ENCODE measurements at regions of chr11 and their contacts with region 1.

Region 1: GRCh38 chr11:118928108-118928870 is 2.6 kb upstream of the BCL9L start:
- DNase-seq: peak; percentile 87 to 100 (median 94)
- ATAC-seq: peak; percentile 58
- H3K4me3 ChIP-seq: peak overlapping the region; percentile 74 to 85
- H3K4me3 Mint-ChIP-seq: peak overlapping the region; percentile 96
- H3K27ac ChIP-seq: peak overlapping the region; percentile 88 to 97
- H3K27ac Mint-ChIP-seq: peak overlapping the region; percentile 98
- H3K4me1 ChIP-seq: peaks cover 29% of the 10 kb centered on the region
- H3K4me1 Mint-ChIP-seq: peaks cover 44% of the 10 kb centered on the region
- H3K27me3 ChIP-seq: no peaks in the 10 kb centered on the region
- H3K27me3 Mint-ChIP-seq: no peaks in the 10 kb centered on the region
- CTCF ChIP-seq: peak; percentile 79

Region 2: DNA sequence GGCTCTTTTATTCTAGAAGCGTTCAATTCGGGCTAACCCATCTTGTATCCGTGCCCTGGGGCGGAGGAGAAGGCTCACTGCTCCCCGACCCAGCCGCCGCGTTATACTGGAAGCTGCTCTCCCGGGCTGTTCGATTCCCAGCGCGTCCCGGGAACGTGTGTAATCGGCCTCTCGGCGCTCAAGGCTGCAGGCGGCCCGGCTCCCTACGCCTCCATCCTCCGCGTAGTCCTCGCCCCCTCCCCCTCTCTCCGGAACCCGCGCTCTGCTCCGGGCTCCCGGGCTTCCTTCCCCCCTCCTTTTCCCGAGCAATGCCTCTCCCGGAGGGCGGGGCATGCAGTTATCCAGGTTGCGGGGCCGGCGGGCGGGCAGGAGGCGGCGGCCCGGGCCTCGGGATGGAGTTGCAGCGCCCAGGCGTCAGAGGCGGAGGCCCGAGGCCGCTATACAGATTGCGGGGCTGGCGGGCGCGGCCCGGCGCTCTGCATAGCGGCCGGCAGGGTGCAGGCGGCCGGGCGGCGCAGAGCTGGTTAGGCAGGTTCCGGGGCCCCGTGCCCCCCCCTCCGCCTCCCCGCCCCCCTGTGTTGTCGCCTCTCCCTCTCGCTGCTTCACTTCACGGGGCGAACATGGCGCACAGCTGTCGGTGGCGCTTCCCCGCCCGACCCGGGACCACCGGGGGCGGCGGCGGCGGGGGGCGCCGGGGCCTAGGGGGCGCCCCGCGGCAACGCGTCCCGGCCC is 492.2 kb before region 1 on chr11 and contains the start of gene KMT2A:
- CTCF ChIA-PET with region 1: no interaction called
- POLR2A ChIA-PET with region 1: no interaction called
- intact Hi-C with region 1: loop called in 1 of 2 experiments (anchors 5 kb)
- DNase-seq: peak; percentile 91 to 99 (median 94)
- ATAC-seq: peak; percentile 62
- H3K4me3 ChIP-seq: peak within 1 kb of the TSS; percentile 89 to 94
- H3K4me3 Mint-ChIP-seq: peak within 1 kb of the TSS; percentile 96
- H3K27ac ChIP-seq: peak within 1 kb of the TSS; percentile 79 to 94
- H3K27ac Mint-ChIP-seq: peak within 1 kb of the TSS; percentile 98
- H3K4me1 ChIP-seq: peaks cover 30% of the 10 kb centered on the region
- H3K4me1 Mint-ChIP-seq: peaks cover 35% of the 10 kb centered on the region
- H3K27me3 ChIP-seq: no peaks in the 10 kb centered on the region
- H3K27me3 Mint-ChIP-seq: no peaks in the 10 kb centered on the region
- CTCF ChIP-seq: no peak
- total RNA-seq, gene KMT2A: 127 to 136 TPM

Region 3: GRCh38 chr11:118652681-118653181 is 275.6 kb before region 1 on chr11:
- CTCF ChIA-PET with region 1: no interaction called
- POLR2A ChIA-PET with region 1: no interaction called
- intact Hi-C with region 1: no loop called
- DNase-seq: no peak
- ATAC-seq: no peak
- H3K4me3 ChIP-seq: no peak overlapping the region
- H3K4me3 Mint-ChIP-seq: no peak overlapping the region
- H3K27ac ChIP-seq: no peak overlapping the region
- H3K27ac Mint-ChIP-seq: peak overlapping the region; percentile 66
- H3K4me1 ChIP-seq: no peaks in the 10 kb centered on the region
- H3K4me1 Mint-ChIP-seq: peaks cover 7% of the 10 kb centered on the region
- H3K27me3 ChIP-seq: no peaks in the 10 kb centered on the region
- H3K27me3 Mint-ChIP-seq: no peaks in the 10 kb centered on the region
- CTCF ChIP-seq: no peak

Region 4: DNA sequence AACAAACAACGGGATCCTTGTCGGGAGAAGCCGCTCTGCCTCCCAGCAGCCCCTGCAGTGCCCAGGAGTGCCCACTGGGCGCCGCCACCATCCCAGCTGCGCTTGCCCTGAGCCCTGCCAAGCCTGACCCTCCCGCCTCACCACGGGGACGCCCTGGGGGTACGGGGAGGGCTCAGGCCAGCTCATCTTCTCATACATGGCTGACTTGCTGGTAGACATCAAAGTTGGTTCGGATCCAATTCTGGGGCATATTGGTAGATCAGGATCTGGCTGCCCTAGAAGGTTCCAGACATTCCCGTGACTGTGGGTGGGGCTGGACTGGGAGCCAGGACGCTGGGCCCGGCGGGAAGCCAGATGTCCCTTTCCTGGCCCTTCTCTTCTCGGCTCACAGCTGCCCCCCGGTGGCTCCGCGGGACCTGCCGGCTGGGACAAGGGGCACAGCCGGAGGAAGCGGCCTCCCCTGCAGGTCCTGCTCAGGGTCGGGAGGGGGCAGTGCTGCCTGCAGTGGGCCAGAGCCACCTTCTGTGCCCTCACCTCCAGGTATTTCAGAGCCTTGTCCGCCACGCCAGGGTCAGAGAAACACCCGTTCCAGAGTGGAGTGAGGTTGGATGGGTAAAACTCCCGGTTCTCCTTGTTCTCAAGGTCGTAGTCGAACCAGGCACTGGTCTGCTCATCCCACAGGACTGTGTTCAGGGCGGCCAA is 238.3 kb before region 1 on chr11:
- CTCF ChIA-PET with region 1: interaction called, 15 read pairs
- POLR2A ChIA-PET with region 1: interaction called, 4 read pairs
- intact Hi-C with region 1: loop called in 1 of 2 experiments (anchors 1 kb)
- DNase-seq: peak; percentile 67 to 92 (median 89)
- ATAC-seq: peak; percentile 85
- H3K4me3 ChIP-seq: peak overlapping the region; percentile 45 to 83
- H3K4me3 Mint-ChIP-seq: peak overlapping the region; percentile 74
- H3K27ac ChIP-seq: peak overlapping the region; percentile 40 to 51
- H3K27ac Mint-ChIP-seq: peak overlapping the region; percentile 87
- H3K4me1 ChIP-seq: peaks cover 54% of the 10 kb centered on the region
- H3K4me1 Mint-ChIP-seq: peaks cover 58% of the 10 kb centered on the region
- H3K27me3 ChIP-seq: no peaks in the 10 kb centered on the region
- H3K27me3 Mint-ChIP-seq: no peaks in the 10 kb centered on the region
- CTCF ChIP-seq: peak; percentile 98

Region 5: DNA sequence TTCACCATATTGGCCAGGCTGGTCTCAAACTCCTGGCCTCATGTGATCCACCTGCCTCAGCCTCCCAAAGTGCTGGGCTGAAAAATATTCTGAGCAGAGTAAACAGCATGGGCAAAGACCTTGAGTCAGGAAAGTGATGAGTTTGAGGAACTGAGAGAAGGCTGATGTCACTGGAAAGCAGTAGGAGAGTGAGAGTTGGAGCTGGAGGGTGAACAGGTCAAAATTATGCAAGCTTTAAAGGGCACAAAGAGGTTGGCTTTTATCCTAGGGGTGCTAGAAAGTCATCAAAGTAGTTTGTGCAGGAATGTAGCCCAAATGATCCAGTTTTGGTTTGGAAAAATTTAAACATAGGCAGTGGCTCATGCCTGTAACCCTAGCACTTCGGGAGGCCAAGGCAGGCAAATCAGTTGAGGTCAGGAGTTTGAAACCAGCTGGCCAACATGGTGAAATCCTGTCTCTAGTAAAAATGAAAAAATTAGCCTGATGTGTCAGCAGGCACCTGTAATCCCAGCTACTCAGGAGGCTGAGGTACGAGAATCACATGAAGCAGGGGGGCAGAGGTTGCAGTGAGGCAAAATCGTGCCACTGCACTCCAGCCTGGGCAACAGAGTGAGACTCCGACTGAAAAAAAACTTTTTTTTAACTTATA is 89.3 kb before region 1 on chr11:
- CTCF ChIA-PET with region 1: no interaction called
- POLR2A ChIA-PET with region 1: no interaction called
- intact Hi-C with region 1: no loop called
- DNase-seq: no peak
- ATAC-seq: no peak
- H3K4me3 ChIP-seq: no peak overlapping the region
- H3K4me3 Mint-ChIP-seq: no peak overlapping the region
- H3K27ac ChIP-seq: no peak overlapping the region
- H3K27ac Mint-ChIP-seq: no peak overlapping the region
- H3K4me1 ChIP-seq: peaks cover 8% of the 10 kb centered on the region
- H3K4me1 Mint-ChIP-seq: peaks cover 27% of the 10 kb centered on the region
- H3K27me3 ChIP-seq: no peaks in the 10 kb centered on the region
- H3K27me3 Mint-ChIP-seq: no peaks in the 10 kb centered on the region
- CTCF ChIP-seq: no peak

Region 6: DNA sequence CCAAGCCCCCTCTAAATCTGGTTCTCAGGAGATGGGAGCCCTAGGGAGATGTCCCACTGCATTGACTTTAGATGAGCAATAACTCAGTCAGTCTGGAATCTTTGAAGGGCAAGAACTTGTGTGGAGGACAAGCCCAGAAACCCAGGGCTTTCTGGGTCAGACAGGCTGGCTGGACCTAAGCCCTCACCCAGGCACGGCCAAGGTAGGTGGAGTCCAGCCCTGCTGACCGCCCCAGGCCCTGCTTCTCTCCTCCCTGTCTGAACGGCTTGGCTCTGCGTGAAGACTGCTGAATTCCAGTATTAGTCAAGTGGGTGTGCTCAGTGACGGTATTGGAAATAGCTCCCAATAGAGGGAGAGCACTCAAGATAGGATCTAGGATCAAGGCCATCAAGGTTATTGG is 38.5 kb before region 1 on chr11:
- CTCF ChIA-PET with region 1: interaction called, 20 read pairs
- POLR2A ChIA-PET with region 1: interaction called, 20 read pairs
- intact Hi-C with region 1: loop called in 1 of 2 experiments (anchors 5 kb)
- DNase-seq: no peak
- ATAC-seq: no peak
- H3K4me3 ChIP-seq: no peak overlapping the region
- H3K4me3 Mint-ChIP-seq: peak overlapping the region; percentile 18
- H3K27ac ChIP-seq: no peak overlapping the region
- H3K27ac Mint-ChIP-seq: peak overlapping the region; percentile 85
- H3K4me1 ChIP-seq: peaks cover 77% of the 10 kb centered on the region
- H3K4me1 Mint-ChIP-seq: peaks cover 83% of the 10 kb centered on the region
- H3K27me3 ChIP-seq: no peaks in the 10 kb centered on the region
- H3K27me3 Mint-ChIP-seq: no peaks in the 10 kb centered on the region
- CTCF ChIP-seq: no peak

Region 7: GRCh38 chr11:118907051-118908042 is 20.9 kb before region 1 on chr11:
- CTCF ChIA-PET with region 1: no interaction called
- POLR2A ChIA-PET with region 1: interaction called, 201 read pairs
- intact Hi-C with region 1: loop called (anchors 1 kb)
- DNase-seq: peak; percentile 79 to 94 (median 87)
- ATAC-seq: peak; percentile 41
- H3K4me3 ChIP-seq: no peak overlapping the region
- H3K4me3 Mint-ChIP-seq: peak overlapping the region; percentile 53
- H3K27ac ChIP-seq: peak overlapping the region; percentile 2 to 61
- H3K27ac Mint-ChIP-seq: peak overlapping the region; percentile 92
- H3K4me1 ChIP-seq: peaks cover 58% of the 10 kb centered on the region
- H3K4me1 Mint-ChIP-seq: peaks cover 58% of the 10 kb centered on the region
- H3K27me3 ChIP-seq: no peaks in the 10 kb centered on the region
- H3K27me3 Mint-ChIP-seq: no peaks in the 10 kb centered on the region
- CTCF ChIP-seq: peak; percentile 91

Region 8: GRCh38 chr11:118939953-118940598 is 11.8 kb after region 1 on chr11:
- CTCF ChIA-PET with region 1: interaction called, 70 read pairs
- POLR2A ChIA-PET with region 1: interaction called, 16 read pairs
- intact Hi-C with region 1: no loop called
- DNase-seq: peak in 6 of 9 experiments; percentile 39 to 74 (median 60)
- ATAC-seq: peak; percentile 94
- H3K4me3 ChIP-seq: peak overlapping the region in 1 of 2 experiments; percentile 33
- H3K4me3 Mint-ChIP-seq: peak overlapping the region; percentile 49
- H3K27ac ChIP-seq: no peak overlapping the region
- H3K27ac Mint-ChIP-seq: no peak overlapping the region
- H3K4me1 ChIP-seq: peaks cover 33% of the 10 kb centered on the region
- H3K4me1 Mint-ChIP-seq: peaks cover 47% of the 10 kb centered on the region
- H3K27me3 ChIP-seq: no peaks in the 10 kb centered on the region
- H3K27me3 Mint-ChIP-seq: no peaks in the 10 kb centered on the region
- CTCF ChIP-seq: no peak

Region 9: GRCh38 chr11:118997627-118998387 is 69.5 kb after region 1 on chr11 and contains the start of gene CENATAC:
- CTCF ChIA-PET with region 1: no interaction called
- POLR2A ChIA-PET with region 1: no interaction called
- intact Hi-C with region 1: no loop called
- DNase-seq: peak; percentile 87 to 97 (median 96)
- ATAC-seq: peak; percentile 94
- H3K4me3 ChIP-seq: peak within 1 kb of the TSS; percentile 89 to 95
- H3K4me3 Mint-ChIP-seq: peak within 1 kb of the TSS; percentile 84
- H3K27ac ChIP-seq: peak within 1 kb of the TSS; percentile 59 to 92
- H3K27ac Mint-ChIP-seq: peak within 1 kb of the TSS; percentile 88
- H3K4me1 ChIP-seq: peaks cover 23% of the 10 kb centered on the region
- H3K4me1 Mint-ChIP-seq: peaks cover 36% of the 10 kb centered on the region
- H3K27me3 ChIP-seq: no peaks in the 10 kb centered on the region
- H3K27me3 Mint-ChIP-seq: no peaks in the 10 kb centered on the region
- CTCF ChIP-seq: no peak
- total RNA-seq, gene CENATAC: 103 to 116 TPM

Region 10: DNA sequence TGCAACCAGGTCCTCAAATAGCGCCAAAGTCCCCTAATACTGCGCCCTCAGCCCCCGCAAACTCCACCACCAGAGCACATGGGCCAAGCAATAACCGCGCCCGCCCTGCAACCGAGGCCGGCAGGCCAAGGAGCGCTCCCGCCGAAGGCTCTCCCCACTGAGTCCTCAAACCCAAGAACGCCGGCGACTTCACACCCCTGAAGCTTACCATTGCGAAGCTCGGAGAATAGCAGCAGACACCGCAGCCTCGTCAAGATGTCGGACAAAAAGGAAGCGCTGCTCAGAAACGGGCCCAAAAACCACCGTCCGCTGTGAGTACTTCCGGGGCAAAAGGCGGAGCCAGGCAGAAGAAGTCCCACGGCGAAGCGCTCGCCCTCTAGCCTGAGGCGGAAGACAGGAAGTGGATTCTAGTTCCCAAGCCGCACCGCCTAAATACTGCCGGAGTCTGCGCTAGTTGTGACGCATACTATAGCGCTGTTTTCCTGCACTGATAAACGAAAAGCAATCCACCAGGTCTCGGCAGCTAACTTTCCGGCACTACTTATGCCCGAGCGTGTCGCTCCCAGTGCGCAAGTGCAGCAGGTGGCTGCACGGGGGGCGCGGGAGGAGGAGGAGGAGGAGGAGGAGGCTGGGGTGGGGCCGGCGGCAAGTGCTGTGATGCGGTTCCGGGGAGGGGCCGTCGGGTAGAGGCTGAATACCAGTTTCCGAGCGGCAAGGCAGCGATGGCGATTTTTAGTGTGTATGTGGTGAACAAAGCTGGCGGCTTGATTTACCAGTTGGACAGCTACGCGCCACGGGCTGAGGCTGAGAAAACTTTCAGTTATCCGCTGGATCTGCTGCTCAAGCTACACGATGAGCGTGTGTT is 90.0 kb after region 1 on chr11 and contains the starts of genes RPS25 and TRAPPC4:
- CTCF ChIA-PET with region 1: no interaction called
- POLR2A ChIA-PET with region 1: no interaction called
- intact Hi-C with region 1: loop called in 1 of 2 experiments (anchors 5 kb)
- DNase-seq: peak; percentile 90 to 99 (median 95)
- ATAC-seq: peak; percentile 86
- H3K4me3 ChIP-seq: peak within 1 kb of the TSS; percentile 98
- H3K4me3 Mint-ChIP-seq: peak within 1 kb of the TSS; percentile 99
- H3K27ac ChIP-seq: peak within 1 kb of the TSS; percentile 98 to 99
- H3K27ac Mint-ChIP-seq: peak within 1 kb of the TSS; percentile 99
- H3K4me1 ChIP-seq: peaks cover 44% of the 10 kb centered on the region
- H3K4me1 Mint-ChIP-seq: peaks cover 55% of the 10 kb centered on the region
- H3K27me3 ChIP-seq: no peaks in the 10 kb centered on the region
- H3K27me3 Mint-ChIP-seq: no peaks in the 10 kb centered on the region
- CTCF ChIP-seq: no peak
- total RNA-seq, gene RPS25: 2,737 to 2,869 TPM
- total RNA-seq, gene TRAPPC4: 65.6 to 73.3 TPM

Region 11: DNA sequence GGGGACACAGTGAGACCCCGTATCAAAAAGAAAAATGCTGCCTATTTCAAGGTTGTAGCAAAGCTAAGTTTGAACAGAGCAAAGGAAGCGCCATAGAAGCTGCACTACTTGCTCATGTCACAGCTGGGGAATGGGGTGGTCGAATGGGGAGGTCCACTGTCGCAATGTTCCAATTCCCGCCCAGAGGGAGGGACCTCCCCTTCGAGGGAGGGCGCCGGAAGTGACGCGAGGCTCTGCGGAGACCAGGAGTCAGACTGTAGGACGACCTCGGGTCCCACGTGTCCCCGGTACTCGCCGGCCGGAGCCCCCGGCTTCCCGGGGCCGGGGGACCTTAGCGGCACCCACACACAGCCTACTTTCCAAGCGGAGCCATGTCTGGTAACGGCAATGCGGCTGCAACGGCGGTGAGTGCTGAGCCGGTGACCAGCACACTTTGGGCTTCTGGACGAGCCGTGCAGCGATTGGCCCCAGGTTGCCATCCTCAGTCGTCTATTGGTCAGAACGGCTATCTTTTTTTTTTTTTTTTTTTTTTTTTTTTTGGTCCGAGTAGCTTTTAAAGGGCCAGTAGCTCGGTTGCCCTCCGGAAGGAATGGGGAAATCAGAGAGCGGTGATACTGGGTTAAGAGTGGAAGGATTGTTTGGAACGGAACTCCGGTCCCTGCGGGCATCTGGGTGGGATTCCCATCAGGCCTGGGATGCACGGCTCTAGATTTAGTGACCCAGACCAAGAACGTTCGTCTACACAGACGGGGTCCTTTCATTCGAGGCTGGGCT is 156.6 kb after region 1 on chr11 and contains the start of gene HMBS:
- CTCF ChIA-PET with region 1: no interaction called
- POLR2A ChIA-PET with region 1: no interaction called
- intact Hi-C with region 1: no loop called
- DNase-seq: peak; percentile 78 to 97 (median 92)
- ATAC-seq: peak; percentile 93
- H3K4me3 ChIP-seq: peak within 1 kb of the TSS; percentile 92
- H3K4me3 Mint-ChIP-seq: peak within 1 kb of the TSS; percentile 91
- H3K27ac ChIP-seq: peak within 1 kb of the TSS; percentile 75 to 86
- H3K27ac Mint-ChIP-seq: peak within 1 kb of the TSS; percentile 93
- H3K4me1 ChIP-seq: peaks cover 18% of the 10 kb centered on the region
- H3K4me1 Mint-ChIP-seq: peaks cover 20% of the 10 kb centered on the region
- H3K27me3 ChIP-seq: no peaks in the 10 kb centered on the region
- H3K27me3 Mint-ChIP-seq: no peaks in the 10 kb centered on the region
- CTCF ChIP-seq: no peak
- total RNA-seq, gene HMBS: 5.4 to 6.4 TPM